ENCODE measurements at regions of chr2 and their contacts with region 1.

Region 1: DNA sequence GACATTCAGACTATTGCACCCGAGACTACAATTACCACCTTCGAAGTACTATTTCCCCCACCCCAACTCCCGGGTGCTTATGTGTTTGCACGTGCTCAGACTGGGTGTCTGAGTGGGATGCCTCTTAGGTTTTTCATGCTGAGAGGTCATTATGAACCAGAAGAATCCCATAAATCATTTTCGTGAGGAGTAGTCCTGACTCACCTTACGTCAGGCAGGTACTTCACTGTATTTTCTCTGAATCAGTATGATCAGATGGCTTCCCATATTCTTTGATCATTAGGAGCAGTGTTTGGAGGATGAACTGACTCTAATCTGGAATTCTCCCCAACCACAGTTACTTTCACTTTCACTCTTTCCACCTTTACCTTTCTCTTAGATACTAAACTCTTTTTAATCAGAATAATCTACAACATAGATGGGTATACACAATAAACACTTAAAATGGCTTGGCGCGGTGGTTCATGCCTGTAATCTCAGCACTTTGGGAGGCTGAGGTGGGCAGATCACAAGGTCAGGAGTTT is 38.4 kb upstream of the STAT4 start:
- DNase-seq: peak; percentile 56
- H3K4me3 Mint-ChIP-seq: peak overlapping the region; percentile 62
- H3K27ac Mint-ChIP-seq: peak overlapping the region; percentile 41
- H3K4me1 Mint-ChIP-seq: peaks cover 39% of the 10 kb centered on the region
- H3K27me3 Mint-ChIP-seq: no peaks in the 10 kb centered on the region

Region 2: DNA sequence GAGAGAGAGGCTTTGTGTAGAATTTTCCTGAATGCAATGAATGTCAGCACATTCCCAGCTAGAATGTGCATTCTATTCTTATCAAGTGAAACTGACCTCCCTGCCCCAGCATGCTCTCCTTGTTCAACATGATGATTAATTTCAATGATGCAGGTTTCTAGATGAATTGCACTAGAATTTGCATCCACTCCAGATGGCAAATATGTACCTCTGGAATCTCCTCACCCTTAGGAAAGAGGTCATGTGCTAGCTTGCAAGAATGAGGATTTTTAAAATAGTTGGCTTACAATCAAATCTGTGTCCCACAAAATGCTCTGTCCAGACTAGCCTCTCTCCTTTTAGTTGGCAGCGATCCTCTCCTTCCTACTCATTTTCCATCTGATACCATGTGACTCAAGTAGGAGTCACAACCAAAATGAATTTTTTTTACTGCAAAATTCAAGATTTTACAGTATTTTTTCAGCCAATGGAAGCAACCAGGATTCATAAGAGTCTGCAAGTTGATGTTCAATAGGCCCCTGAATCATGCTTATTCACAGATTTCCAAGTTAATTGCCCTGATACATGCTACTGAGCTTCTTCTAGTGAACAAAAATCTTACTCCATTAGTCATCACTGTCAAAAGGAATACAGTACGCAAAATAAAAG is 17.3 kb before region 1 on chr2:
- intact Hi-C with region 1: loop called (anchors 1 kb)
- DNase-seq: no peak
- H3K4me3 Mint-ChIP-seq: no peak overlapping the region
- H3K27ac Mint-ChIP-seq: peak overlapping the region; percentile 52
- H3K4me1 Mint-ChIP-seq: peaks cover 69% of the 10 kb centered on the region
- H3K27me3 Mint-ChIP-seq: no peaks in the 10 kb centered on the region

Region 3: GRCh38 chr2:191202881-191203397 is 13.8 kb after region 1 on chr2:
- intact Hi-C with region 1: loop called (anchors 1 kb)
- DNase-seq: peak; percentile 75
- H3K4me3 Mint-ChIP-seq: peak overlapping the region; percentile 25
- H3K27ac Mint-ChIP-seq: peak overlapping the region; percentile 74
- H3K4me1 Mint-ChIP-seq: peaks cover 39% of the 10 kb centered on the region
- H3K27me3 Mint-ChIP-seq: no peaks in the 10 kb centered on the region

Region 4: GRCh38 chr2:191218292-191218898 is 29.2 kb after region 1 on chr2:
- intact Hi-C with region 1: loop called (anchors 1 kb)
- DNase-seq: peak; percentile 75
- H3K4me3 Mint-ChIP-seq: no peak overlapping the region
- H3K27ac Mint-ChIP-seq: no peak overlapping the region
- H3K4me1 Mint-ChIP-seq: peaks cover 27% of the 10 kb centered on the region
- H3K27me3 Mint-ChIP-seq: no peaks in the 10 kb centered on the region